WTC11 (cell line): ENCODE measurements at regions of chr11 and their contacts with region 1.

Region 1: DNA sequence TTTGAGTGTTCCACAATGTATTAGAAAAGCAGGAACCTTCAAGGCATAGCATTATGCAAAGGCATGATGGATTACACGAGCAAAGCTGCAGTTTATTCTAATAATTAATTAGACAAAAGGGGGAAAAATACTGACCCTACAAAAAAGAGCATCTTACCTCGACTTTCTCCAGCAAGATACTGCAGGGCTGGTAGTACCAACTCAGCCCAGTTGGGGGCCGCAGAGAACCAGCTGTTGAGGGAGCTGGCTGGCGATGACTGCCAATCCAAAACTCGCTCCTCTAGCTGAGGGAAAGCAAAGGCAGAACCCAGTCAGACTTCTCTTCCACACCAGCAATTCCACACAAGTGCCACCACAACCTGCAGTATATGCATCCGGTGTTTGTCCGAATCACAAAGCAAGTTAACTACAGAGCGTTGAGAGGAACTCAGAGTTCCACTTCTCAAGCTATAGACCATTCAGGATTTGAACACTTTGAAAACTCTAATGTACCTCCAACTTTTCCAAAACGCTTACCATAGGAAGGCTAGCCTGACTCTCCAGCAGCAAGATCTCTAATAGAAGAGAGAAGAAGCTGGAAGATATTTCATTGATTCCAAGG is 13.7 kb downstream of the NFRKB start:
- DNase-seq: peak; percentile 74
- ATAC-seq: peak; percentile 88
- H3K4me3 Mint-ChIP-seq: no peak overlapping the region
- H3K27ac Mint-ChIP-seq: no peak overlapping the region; the same call in 1 of the 2 replicates
- H3K4me1 Mint-ChIP-seq: no peaks in the 10 kb centered on the region
- H3K27me3 Mint-ChIP-seq: no peaks in the 10 kb centered on the region
- CTCF ChIP-seq: peak; percentile 68

Region 2: GRCh38 chr11:129828301-129828836 is 53.3 kb before region 1 on chr11:
- CTCF ChIA-PET with region 1: no interaction called
- POLR2A ChIA-PET with region 1: no interaction called
- DNase-seq: no peak
- ATAC-seq: no peak
- H3K4me3 Mint-ChIP-seq: no peak overlapping the region
- H3K27ac Mint-ChIP-seq: no peak overlapping the region
- H3K4me1 Mint-ChIP-seq: no peaks in the 10 kb centered on the region
- H3K27me3 Mint-ChIP-seq: no peaks in the 10 kb centered on the region; the same call in 1 of the 2 replicates
- CTCF ChIP-seq: no peak

Region 3: GRCh38 chr11:129895126-129896041 is 13.7 kb after region 1 on chr11 and contains the start of gene NFRKB:
- CTCF ChIA-PET with region 1: interaction called, 11 read pairs
- POLR2A ChIA-PET with region 1: no interaction called
- DNase-seq: peak; percentile 93
- ATAC-seq: peak; percentile 97
- H3K4me3 Mint-ChIP-seq: peak within 1 kb of the TSS; percentile 93
- H3K27ac Mint-ChIP-seq: peak within 1 kb of the TSS; percentile 96
- H3K4me1 Mint-ChIP-seq: peaks cover 24% of the 10 kb centered on the region
- H3K27me3 Mint-ChIP-seq: no peaks in the 10 kb centered on the region
- CTCF ChIP-seq: no peak
- total RNA-seq, gene NFRKB: 30.7 to 35.5 TPM (median 31.4 TPM) in 3 replicates

Region 4: GRCh38 chr11:130168105-130168504 is 286.4 kb after region 1 on chr11:
- CTCF ChIA-PET with region 1: no interaction called
- POLR2A ChIA-PET with region 1: no interaction called
- DNase-seq: no peak
- ATAC-seq: no peak
- H3K4me3 Mint-ChIP-seq: no peak overlapping the region
- H3K27ac Mint-ChIP-seq: no peak overlapping the region
- H3K4me1 Mint-ChIP-seq: 0 out of 2 replicates have a peak, but pooled peaks cover 4% of the 10 kb centered on the region
- H3K27me3 Mint-ChIP-seq: peaks cover 69% of the 10 kb centered on the region
- CTCF ChIP-seq: no peak